H1 (cell line): ENCODE measurements at regions of chr11 and their contacts with region 1.

Region 1: GRCh38 chr11:58900479-58901420 is 38.5 kb upstream of the GLYATL1 start:
- DNase-seq: peak; percentile 95 to 98
- H3K4me3 ChIP-seq: peak overlapping the region; percentile 38 to 59 (median 46); a peak in 6 of 8 replicates
- H3K27ac ChIP-seq: no peak overlapping the region
- H3K4me1 ChIP-seq: peaks cover 0 to 6% (median 2%) of the 10 kb centered on the region in 4 experiments; a peak in 3 of 7 replicates
- H3K27me3 ChIP-seq: no peaks in the 10 kb centered on the region; a peak in 3 of 7 replicates
- CTCF ChIP-seq: peak; percentile 74 to 86 (median 77)
- EP300 ChIP-seq: no peak; a peak in 1 of 3 replicates
- POLR2A ChIP-seq: no peak
- RAD21 ChIP-seq: peak; percentile 82

Region 2: GRCh38 chr11:58829786-58830185 is 71.0 kb before region 1 on chr11:
- CTCF ChIA-PET with region 1: no interaction called
- POLR2A ChIA-PET with region 1: no interaction called
- DNase-seq: no peak
- H3K4me3 ChIP-seq: no peak overlapping the region
- H3K27ac ChIP-seq: no peak overlapping the region
- H3K4me1 ChIP-seq: no peaks in the 10 kb centered on the region
- H3K27me3 ChIP-seq: no peaks in the 10 kb centered on the region
- CTCF ChIP-seq: no peak
- EP300 ChIP-seq: no peak
- POLR2A ChIP-seq: no peak
- RAD21 ChIP-seq: no peak

Region 3: GRCh38 chr11:58963528-58964104 is 62.9 kb after region 1 on chr11:
- CTCF ChIA-PET with region 1: interaction called, 12 read pairs
- POLR2A ChIA-PET with region 1: interaction called, 4 read pairs
- DNase-seq: peak; percentile 70 to 80
- H3K4me3 ChIP-seq: peak overlapping the region; percentile 26 to 56 (median 37); a peak in 5 of 8 replicates
- H3K27ac ChIP-seq: no peak overlapping the region
- H3K4me1 ChIP-seq: peaks cover 0 to 2% (median 0%) of the 10 kb centered on the region in 4 experiments; a peak in 1 of 7 replicates
- H3K27me3 ChIP-seq: peaks cover 0 to 16% (median 13%) of the 10 kb centered on the region in 4 experiments; a peak in 6 of 7 replicates
- CTCF ChIP-seq: peak; percentile 46 to 62 (median 53); a peak in 3 of 4 replicates
- EP300 ChIP-seq: no peak
- POLR2A ChIP-seq: peak in 1 of 2 experiments; percentile 50; a peak in 1 of 3 replicates
- RAD21 ChIP-seq: peak; percentile 62 to 66